ENCODE measurements at regions of chr14 and their contacts with region 1.

Region 1: GRCh38 chr14:19754172-19754571 is 10.8 kb downstream of the OR4Q3 start:
- DNase-seq: no peak
- H3K4me3 ChIP-seq: no peak overlapping the region
- H3K27ac ChIP-seq: no peak overlapping the region
- H3K4me1 ChIP-seq: no peaks in the 10 kb centered on the region
- CTCF ChIP-seq: no peak

Region 2: DNA sequence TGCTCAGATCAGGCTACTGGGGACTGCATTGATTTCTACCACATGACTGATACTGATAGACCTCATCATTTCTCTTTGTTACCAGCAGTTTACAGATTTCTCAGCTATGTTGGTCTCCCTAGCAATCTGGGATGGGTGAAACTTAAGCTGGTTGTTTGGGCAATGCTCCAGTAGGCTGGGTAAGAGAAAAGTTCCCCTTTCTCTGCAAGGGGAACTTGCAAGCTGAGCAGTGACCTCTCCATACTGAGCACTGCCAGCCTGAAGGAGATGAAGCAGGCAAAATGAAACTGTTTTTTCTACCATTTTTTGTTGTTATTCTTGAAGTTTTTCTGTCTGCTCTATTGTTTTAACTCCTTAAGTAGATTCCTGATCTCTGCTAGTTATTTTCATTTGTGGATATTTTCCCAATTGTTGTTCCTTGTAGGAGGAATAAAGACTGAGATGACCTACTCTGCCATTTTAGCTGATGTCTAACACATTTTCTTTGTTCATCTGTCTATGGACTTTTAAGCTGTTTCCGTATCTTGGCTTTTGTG is 17.8 kb after region 1 on chr14:
- CTCF ChIA-PET with region 1: no interaction called
- POLR2A ChIA-PET with region 1: interaction called, 3 read pairs
- intact Hi-C with region 1: loop called (anchors 2 kb)
- DNase-seq: no peak
- H3K4me3 ChIP-seq: no peak overlapping the region
- H3K27ac ChIP-seq: no peak overlapping the region
- H3K4me1 ChIP-seq: no peaks in the 10 kb centered on the region
- CTCF ChIP-seq: no peak

Measured in OCI-LY7 (cell line).